ENCODE measurements at regions of chr2 and their contacts with region 1.

Region 1: GRCh38 chr2:182038578-182038977 is 52.9 kb downstream of the PPP1R1C start:
- DNase-seq: no peak
- ATAC-seq: no peak
- H3K4me3 Mint-ChIP-seq: no peak overlapping the region
- H3K27ac Mint-ChIP-seq: no peak overlapping the region
- H3K4me1 Mint-ChIP-seq: no peaks in the 10 kb centered on the region
- H3K27me3 Mint-ChIP-seq: peaks cover under 1% of the 10 kb centered on the region

Region 2: GRCh38 chr2:182020720-182021119 is 17.9 kb before region 1 on chr2:
- CTCF ChIA-PET with region 1: no interaction called
- POLR2A ChIA-PET with region 1: no interaction called
- intact Hi-C with region 1: loop called in 1 of 2 experiments (anchors 2 kb)
- DNase-seq: no peak
- ATAC-seq: peak; percentile 12
- H3K4me3 Mint-ChIP-seq: no peak overlapping the region
- H3K27ac Mint-ChIP-seq: no peak overlapping the region
- H3K4me1 Mint-ChIP-seq: peaks cover 1% of the 10 kb centered on the region
- H3K27me3 Mint-ChIP-seq: peaks cover 2% of the 10 kb centered on the region

Region 3: DNA sequence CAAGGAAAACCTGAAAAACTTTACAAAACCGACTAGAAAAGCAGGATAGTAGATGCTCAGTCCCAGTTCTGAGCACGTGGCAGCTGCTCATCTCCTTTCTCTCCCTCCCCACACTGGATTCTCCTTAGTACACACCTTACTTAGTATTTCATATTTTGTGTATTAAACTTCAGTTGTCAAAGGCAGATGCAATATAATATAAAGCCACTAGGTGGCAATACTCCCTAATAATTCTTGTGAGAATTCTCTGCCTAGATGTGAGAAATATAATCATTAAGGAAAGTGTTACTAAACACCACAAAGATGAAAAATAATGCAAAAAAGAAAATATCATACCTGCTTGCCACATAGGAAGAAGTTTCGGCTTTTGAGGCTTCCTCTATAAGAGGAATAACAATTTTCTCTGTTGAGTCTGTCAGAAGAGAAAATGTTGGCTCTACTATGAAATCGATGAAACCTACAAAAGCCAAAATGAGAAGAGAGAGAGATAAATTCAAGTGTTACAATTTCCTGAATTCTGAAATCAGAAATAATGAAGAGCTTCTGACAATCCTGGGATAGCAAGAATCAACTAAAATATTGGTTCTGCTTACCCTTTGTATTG is 147.7 kb after region 1 on chr2:
- CTCF ChIA-PET with region 1: no interaction called
- POLR2A ChIA-PET with region 1: no interaction called
- intact Hi-C with region 1: no loop called
- DNase-seq: no peak
- ATAC-seq: no peak
- H3K4me3 Mint-ChIP-seq: no peak overlapping the region
- H3K27ac Mint-ChIP-seq: no peak overlapping the region
- H3K4me1 Mint-ChIP-seq: no peaks in the 10 kb centered on the region
- H3K27me3 Mint-ChIP-seq: peaks cover 3% of the 10 kb centered on the region